ENCODE measurements at regions of chr3 and their contacts with region 1.

Region 1: DNA sequence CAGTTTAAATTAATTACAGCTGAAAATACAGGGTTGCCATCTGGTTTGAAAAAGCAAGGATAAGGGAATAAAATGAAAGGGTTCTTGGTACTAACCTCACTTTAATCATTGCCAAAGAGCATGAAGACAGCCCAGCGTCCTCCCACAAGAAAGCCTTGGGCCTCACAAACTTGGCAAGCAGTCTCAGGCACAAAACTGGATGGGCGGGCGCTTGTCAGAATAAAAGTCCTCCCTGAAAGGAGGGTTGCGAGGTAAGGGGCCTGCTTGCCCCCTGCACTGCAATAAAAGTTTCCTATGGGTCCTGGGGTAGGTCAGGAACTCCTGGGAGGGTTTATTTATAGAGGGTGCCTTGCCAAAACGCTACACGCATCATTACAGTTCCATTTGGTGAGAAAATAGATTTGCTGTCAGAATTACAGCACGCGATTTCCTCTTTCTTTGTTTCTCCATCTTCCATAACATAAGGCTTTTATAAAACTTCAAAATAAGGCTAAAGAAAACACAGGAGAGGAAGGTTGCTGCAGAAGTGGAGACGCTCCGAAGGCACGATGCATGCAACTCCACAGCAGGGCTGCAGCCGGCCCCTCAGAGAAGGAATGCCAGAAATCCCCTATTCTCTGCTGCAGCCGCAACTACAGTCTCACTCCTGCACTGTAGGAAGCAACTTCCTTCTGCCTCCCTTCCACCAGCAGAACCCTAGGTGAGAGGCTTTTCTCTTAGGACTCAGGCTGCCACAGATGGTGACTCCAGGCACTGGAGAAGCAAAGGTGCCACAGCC is 61.3 kb downstream of the VGLL4 start:
- DNase-seq: peak; percentile 52
- H3K4me3 ChIP-seq: peak overlapping the region in 3 of 4 donors; percentile 6 to 36 (median 6)
- H3K27ac ChIP-seq: peak overlapping the region; percentile 67 to 86 (median 80)
- H3K4me1 ChIP-seq: peaks cover 25 to 52% (median 33%) of the 10 kb centered on the region in 4 donors
- H3K27me3 ChIP-seq: no peaks in the 10 kb centered on the region
- CTCF ChIP-seq: no peak
- EP300 ChIP-seq: no peak
- POLR2A ChIP-seq: no peak

Region 2: DNA sequence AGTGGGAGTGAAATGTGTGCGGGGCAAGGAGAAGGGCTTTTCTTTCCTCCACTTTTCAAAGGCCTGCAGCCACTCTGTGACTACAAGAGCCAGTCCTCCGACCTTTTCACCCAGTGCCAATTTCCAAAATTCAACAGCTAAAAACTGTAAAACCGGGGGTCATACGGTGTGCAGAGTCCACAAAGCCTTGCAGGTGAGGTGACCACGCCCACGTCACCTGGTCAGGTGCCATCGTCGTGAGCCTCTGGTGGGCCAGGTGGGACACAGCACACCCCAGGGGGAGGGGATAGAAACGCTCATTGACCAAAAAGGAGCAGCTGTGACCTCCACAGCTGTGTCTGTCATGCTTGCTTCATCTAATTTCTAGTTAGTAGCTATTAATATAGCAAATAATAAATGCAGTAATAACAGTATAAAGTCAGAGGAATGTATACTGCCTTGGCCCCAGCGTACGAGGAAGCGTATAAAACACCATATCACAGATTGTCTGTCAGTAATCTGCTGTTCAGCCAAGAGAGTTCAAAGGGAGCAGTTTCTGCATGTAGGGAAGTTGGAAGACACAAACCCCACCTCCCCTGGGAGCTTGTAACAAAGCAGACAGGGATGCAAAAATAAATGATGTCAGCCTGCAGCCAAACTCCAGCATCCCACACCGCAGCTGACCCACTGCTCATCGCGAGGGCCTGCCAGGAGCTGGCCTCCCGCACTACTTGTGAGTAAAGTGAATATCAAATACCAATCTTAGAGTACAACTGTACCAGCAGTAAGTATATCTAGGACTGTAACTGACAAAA is 25.3 kb before region 1 on chr3:
- in situ Hi-C with region 1: no loop called
- intact Hi-C with region 1: no loop called
- DNase-seq: no peak
- H3K4me3 ChIP-seq: no peak overlapping the region
- H3K27ac ChIP-seq: peak overlapping the region; percentile 39 to 68 (median 57)
- H3K4me1 ChIP-seq: peaks cover 17 to 39% (median 22%) of the 10 kb centered on the region in 4 donors
- H3K27me3 ChIP-seq: no peaks in the 10 kb centered on the region
- CTCF ChIP-seq: no peak
- EP300 ChIP-seq: no peak
- POLR2A ChIP-seq: no peak

Region 3: DNA sequence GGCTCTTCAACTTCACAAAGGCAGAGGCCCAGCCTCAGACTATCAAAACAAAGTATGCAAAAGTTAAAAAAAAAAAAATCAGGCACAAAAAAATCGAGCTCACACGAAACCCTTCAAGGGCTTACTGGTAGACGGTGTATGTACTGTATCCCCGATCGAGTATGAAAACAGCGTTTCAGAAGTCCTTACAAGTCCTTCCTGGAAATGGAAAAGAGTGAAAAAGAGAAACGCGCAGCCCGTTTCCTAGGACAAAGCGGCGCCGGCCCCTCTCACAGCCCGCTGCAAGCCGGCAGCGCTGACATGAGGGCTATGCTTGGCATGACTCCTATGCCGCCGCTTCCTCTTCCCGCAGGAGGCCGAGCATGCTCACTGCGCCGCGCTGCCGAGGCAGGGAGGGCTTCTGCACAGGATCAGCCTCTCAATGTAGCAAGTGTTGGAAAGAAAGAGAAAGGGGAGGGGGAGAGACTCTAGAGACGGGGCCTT is 61.3 kb after region 1 on chr3 and contains the start of gene VGLL4:
- in situ Hi-C with region 1: no loop called
- intact Hi-C with region 1: loop called (anchors 10 kb)
- DNase-seq: peak; percentile 86
- H3K4me3 ChIP-seq: peak within 1 kb of the TSS; percentile 51 to 71 (median 60)
- H3K27ac ChIP-seq: peak within 1 kb of the TSS; percentile 92 to 96 (median 94)
- H3K4me1 ChIP-seq: peaks cover 5 to 36% (median 25%) of the 10 kb centered on the region in 4 donors
- H3K27me3 ChIP-seq: no peaks in the 10 kb centered on the region
- CTCF ChIP-seq: peak in 1 of 5 experiments; percentile 8
- EP300 ChIP-seq: peak; percentile 63
- POLR2A ChIP-seq: peak; percentile 64
- total RNA-seq, gene VGLL4: 67.3 to 175 (median 95.0) TPM

Measured in transverse colon (tissue), 4 donors.